Prostate gland (tissue), 2 donors: ENCODE measurements at regions of chr4 and their contacts with region 1.

Region 1: DNA sequence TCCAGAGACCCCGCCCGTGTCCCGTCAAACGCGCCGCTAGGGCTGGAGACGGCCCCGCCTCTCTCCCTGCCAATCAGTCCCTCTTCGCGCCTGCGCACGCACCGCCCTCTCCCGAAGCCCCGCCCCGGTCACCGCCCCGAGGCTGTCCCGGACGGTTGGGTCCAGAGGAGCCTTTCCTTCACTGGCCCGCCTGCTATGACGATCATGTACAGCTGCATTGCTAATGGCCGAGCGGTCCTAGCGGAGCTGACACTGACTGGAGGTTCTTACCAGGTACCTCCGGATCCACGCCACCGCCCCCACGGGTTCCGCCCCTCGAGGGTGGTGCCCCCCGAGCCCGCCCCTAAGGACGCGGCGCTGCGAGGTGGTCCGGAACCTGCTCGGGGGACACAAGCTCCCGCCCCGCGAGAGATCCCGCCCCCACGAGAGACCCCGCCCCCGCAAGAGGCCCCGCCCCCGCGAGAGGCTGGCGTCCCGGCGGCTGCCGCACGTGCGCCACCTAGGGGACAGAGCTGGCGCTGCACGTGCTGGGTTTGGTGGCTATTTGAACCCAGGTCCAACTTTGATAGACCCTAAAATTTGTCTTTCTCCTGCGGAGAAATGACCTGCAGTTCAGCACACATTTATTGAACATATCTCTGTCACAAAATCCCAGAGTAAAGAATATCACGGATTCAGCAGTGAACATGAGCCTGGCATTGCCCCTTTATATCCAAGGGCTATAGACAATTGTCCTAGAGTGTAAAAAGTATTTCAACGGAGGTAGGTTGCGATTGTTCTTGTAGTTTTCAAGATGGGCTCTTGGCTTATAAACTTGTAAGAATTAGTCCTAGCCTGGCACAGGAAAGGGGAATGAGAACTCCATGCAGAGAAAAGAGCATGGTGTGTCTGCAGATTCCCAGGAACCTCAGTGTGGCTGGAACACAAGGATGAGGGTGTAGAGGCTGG is 88.7 kb downstream of the HNRNPD start:
- DNase-seq: peak; percentile 99
- H3K4me3 ChIP-seq: peak overlapping the region; percentile 23 to 37
- H3K27ac ChIP-seq: peak overlapping the region; percentile 55 to 65
- H3K4me1 ChIP-seq: no peaks in the 10 kb centered on the region
- H3K27me3 ChIP-seq: no peaks in the 10 kb centered on the region
- CTCF ChIP-seq: peak; percentile 73 to 94 (median 88)
- POLR2A ChIP-seq: peak; percentile 21

Region 2: DNA sequence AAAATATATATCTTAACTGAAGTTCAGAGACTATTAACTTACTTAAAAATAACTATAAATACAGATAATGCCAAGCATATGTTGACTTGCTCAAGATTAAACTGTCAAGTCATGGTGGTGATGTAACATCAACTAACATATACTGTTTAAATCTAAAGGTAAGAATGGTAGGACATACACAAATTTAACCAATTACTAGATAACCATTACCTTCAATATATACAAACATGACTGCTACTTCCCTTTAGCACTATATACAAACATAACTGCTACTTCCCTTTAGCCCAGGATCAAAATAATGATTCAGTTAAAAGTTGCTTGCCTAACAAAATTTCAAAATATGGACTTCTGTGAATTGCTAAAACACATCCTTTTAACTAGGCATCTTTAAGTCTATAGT is 73.7 kb after region 1 on chr4:
- intact Hi-C with region 1: loop called (anchors 5 kb)
- DNase-seq: no peak
- H3K4me3 ChIP-seq: no peak overlapping the region
- H3K27ac ChIP-seq: no peak overlapping the region
- H3K4me1 ChIP-seq: peaks cover 14% of the 10 kb centered on the region
- H3K27me3 ChIP-seq: no peaks in the 10 kb centered on the region
- CTCF ChIP-seq: no peak
- POLR2A ChIP-seq: no peak

Region 3: GRCh38 chr4:82481506-82481840 is 196.3 kb after region 1 on chr4:
- intact Hi-C with region 1: no loop called
- DNase-seq: no peak
- H3K4me3 ChIP-seq: no peak overlapping the region
- H3K27ac ChIP-seq: no peak overlapping the region
- H3K4me1 ChIP-seq: no peaks in the 10 kb centered on the region
- H3K27me3 ChIP-seq: no peaks in the 10 kb centered on the region
- CTCF ChIP-seq: no peak
- POLR2A ChIP-seq: no peak

Region 4: DNA sequence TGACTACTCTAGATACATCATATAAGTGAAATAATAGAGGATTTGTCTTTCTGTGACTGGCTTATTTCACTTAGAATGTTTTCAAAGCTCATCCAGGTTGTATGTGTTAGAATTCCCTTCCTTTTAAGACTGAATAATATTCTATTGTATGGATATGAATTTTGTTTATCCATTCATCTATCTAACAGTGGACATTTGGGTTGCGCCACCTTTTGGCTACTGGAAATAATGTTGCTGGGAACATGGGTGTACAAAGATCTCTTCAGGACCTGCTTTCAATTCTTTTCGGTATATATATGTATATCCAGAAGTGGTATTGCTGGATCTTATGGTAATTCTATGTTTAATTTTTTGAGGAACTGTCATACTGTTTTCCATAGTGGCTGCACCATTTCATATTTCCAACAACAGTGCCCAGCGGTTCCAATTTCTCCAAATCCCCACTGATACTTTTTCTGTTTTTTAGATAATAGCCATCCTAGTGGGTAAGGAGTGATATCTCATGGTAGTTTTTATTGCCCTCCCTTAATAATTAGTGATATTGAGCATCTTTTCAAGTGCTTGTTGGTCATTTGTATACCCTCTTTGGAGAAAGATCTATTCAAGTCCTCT is 516.9 kb after region 1 on chr4:
- intact Hi-C with region 1: no loop called
- DNase-seq: no peak
- H3K4me3 ChIP-seq: no peak overlapping the region
- H3K27ac ChIP-seq: no peak overlapping the region
- H3K4me1 ChIP-seq: no peaks in the 10 kb centered on the region
- H3K27me3 ChIP-seq: no peaks in the 10 kb centered on the region
- CTCF ChIP-seq: peak in 1 of 4 experiments; percentile 34
- POLR2A ChIP-seq: no peak

Region 5: DNA sequence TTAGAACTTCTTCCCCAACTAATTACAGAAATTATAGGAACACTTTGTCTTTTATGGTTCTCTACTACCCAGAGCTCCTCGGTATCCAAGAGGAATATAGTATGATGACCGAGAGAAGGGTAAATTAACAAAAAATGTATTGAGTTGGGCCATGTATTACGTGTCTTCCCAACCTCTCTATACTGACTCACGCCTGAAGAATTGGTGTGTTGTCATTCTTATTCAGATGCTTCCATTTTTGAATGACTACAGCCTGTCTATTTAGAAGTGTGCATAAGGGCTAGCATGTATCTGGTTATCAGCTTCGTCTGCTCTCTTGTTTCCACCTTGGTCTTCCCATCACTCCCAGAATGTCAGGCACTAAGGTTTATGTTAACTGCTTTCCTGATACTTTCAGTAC is 537.9 kb after region 1 on chr4:
- intact Hi-C with region 1: no loop called
- DNase-seq: no peak
- H3K4me3 ChIP-seq: no peak overlapping the region
- H3K27ac ChIP-seq: no peak overlapping the region
- H3K4me1 ChIP-seq: no peaks in the 10 kb centered on the region
- H3K27me3 ChIP-seq: no peaks in the 10 kb centered on the region
- CTCF ChIP-seq: no peak
- POLR2A ChIP-seq: no peak